ENCODE measurements at regions of chr10 and their contacts with region 1.

Region 1: GRCh38 chr10:38094158-38094920 is at the start of gene ZNF37A:
- DNase-seq: peak; percentile 78 to 93 (median 85)
- H3K4me3 ChIP-seq: peak within 1 kb of the TSS; percentile 86
- H3K4me3 Mint-ChIP-seq: peak within 1 kb of the TSS; percentile 89 to 94 (median 92)
- H3K27ac ChIP-seq: peak within 1 kb of the TSS; percentile 95
- H3K27ac Mint-ChIP-seq: peak within 1 kb of the TSS; percentile 69 to 99 (median 97)
- H3K4me1 ChIP-seq: peaks cover 17% of the 10 kb centered on the region
- H3K4me1 Mint-ChIP-seq: peaks cover 30 to 54% (median 45%) of the 10 kb centered on the region in 3 donors
- H3K27me3 ChIP-seq: no peaks in the 10 kb centered on the region
- H3K27me3 Mint-ChIP-seq: no peaks in the 10 kb centered on the region
- total RNA-seq, gene ZNF37A: 19.0 to 19.6 TPM

Region 2: DNA sequence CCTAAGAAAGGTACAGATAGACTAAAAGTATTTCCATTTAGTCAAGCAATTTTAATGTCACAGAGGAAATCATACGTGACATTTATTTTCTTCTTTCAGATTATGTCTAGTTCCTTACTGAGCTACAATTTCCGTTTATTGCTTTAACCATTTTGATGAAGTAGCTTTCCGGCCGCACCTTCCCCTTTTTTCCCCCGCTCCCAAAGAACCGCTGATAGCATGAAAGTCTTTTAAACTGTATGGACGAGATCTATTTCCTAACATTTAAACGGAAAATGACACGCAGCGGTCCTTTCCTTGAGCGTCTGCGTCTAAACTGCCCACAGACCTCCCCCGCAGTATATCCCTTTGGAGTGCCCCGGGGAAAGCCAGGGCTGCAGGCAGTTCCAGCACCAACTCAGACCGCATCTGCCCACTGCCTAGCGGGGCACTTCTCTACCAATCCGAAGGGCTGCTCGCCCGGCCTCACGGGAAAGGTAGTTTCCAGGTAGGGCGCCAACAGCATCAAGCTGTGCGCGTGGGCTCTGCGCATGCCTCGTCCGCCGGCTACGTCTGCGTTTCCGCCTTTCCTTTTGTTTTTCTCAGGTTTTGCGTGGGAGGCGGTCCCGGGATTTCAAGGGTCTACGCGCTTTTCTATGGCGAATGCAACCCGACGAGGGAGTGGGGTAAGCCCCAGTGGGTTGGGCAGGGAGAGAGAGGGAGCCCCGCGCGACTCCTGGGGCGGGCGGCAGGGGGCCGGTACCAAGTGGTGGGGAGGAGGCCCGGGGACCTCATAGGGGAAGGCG is 84.0 kb before region 1 on chr10 and contains the start of gene ZNF33A:
- CTCF ChIA-PET with region 1: interaction called, 5 read pairs
- POLR2A ChIA-PET with region 1: interaction called, 15 read pairs
- DNase-seq: peak; percentile 88 to 96 (median 94)
- H3K4me3 ChIP-seq: peak within 1 kb of the TSS; percentile 92
- H3K4me3 Mint-ChIP-seq: peak within 1 kb of the TSS; percentile 86 to 98 (median 94)
- H3K27ac ChIP-seq: peak within 1 kb of the TSS; percentile 99
- H3K27ac Mint-ChIP-seq: peak within 1 kb of the TSS; percentile 99 to 100 (median 100)
- H3K4me1 ChIP-seq: peaks cover 16% of the 10 kb centered on the region
- H3K4me1 Mint-ChIP-seq: peaks cover 35 to 52% (median 48%) of the 10 kb centered on the region in 3 donors
- H3K27me3 ChIP-seq: no peaks in the 10 kb centered on the region
- H3K27me3 Mint-ChIP-seq: no peaks in the 10 kb centered on the region
- total RNA-seq, gene ZNF33A: 22.9 to 25.7 TPM

Region 3: DNA sequence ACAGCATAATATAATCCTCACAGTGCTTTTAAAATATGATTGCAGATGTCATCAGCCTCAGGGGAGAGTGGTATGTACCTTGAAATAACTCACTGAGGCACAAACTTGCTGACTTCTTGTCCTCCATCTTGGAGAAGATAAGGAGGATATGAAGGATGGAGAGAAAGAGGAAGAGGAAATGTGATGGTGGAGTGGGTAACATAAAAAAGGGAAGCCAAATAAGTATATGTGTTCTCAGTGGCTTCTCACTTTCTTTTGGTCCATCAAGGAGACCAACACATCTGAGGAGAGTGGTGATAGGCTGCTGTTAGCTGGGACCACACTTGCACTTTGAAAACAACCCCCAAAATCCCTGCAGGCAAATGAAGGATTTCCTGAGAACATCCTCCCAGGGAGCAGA is 21.8 kb before region 1 on chr10:
- CTCF ChIA-PET with region 1: no interaction called
- POLR2A ChIA-PET with region 1: no interaction called
- DNase-seq: no peak
- H3K4me3 ChIP-seq: no peak overlapping the region
- H3K4me3 Mint-ChIP-seq: no peak overlapping the region
- H3K27ac ChIP-seq: no peak overlapping the region
- H3K27ac Mint-ChIP-seq: no peak overlapping the region
- H3K4me1 ChIP-seq: no peaks in the 10 kb centered on the region
- H3K4me1 Mint-ChIP-seq: peaks cover 0 to 4% (median 4%) of the 10 kb centered on the region in 3 donors
- H3K27me3 ChIP-seq: no peaks in the 10 kb centered on the region
- H3K27me3 Mint-ChIP-seq: peaks cover 6 to 11% of the 10 kb centered on the region in 2 donors

Measured in CD8-positive, alpha-beta memory T cell (primary cell).